Prostate gland (tissue), 2 donors: ENCODE measurements at regions of chr3 and their contacts with region 1.

Region 1: GRCh38 chr3:132641837-132642538 is 17.6 kb downstream of the ACAD11 start:
- DNase-seq: no peak
- H3K4me3 ChIP-seq: no peak overlapping the region
- H3K27ac ChIP-seq: no peak overlapping the region
- H3K4me1 ChIP-seq: no peaks in the 10 kb centered on the region
- H3K27me3 ChIP-seq: no peaks in the 10 kb centered on the region
- CTCF ChIP-seq: peak; percentile 62 to 88 (median 82)
- POLR2A ChIP-seq: no peak

Region 2: GRCh38 chr3:132535575-132536441 is 106.2 kb before region 1 on chr3:
- intact Hi-C with region 1: loop called (anchors 1 kb)
- DNase-seq: peak; percentile 72
- H3K4me3 ChIP-seq: no peak overlapping the region
- H3K27ac ChIP-seq: no peak overlapping the region
- H3K4me1 ChIP-seq: peaks cover 8% of the 10 kb centered on the region
- H3K27me3 ChIP-seq: no peaks in the 10 kb centered on the region
- CTCF ChIP-seq: peak in 3 of 4 experiments; percentile 75 to 89 (median 79)
- POLR2A ChIP-seq: no peak